CD8-positive, alpha-beta T cell (primary cell): ENCODE measurements at regions of chr1 and their contacts with region 1.

Region 1: GRCh38 chr1:101567582-101568189 is 330.9 kb downstream of the S1PR1 start:
- DNase-seq: peak; percentile 2 to 64 (median 48)
- ATAC-seq: peak; percentile 84
- H3K4me3 ChIP-seq: no peak overlapping the region
- H3K4me3 Mint-ChIP-seq: no peak overlapping the region
- H3K27ac ChIP-seq: no peak overlapping the region
- H3K27ac Mint-ChIP-seq: no peak overlapping the region
- H3K4me1 ChIP-seq: no peaks in the 10 kb centered on the region
- H3K4me1 Mint-ChIP-seq: no peaks in the 10 kb centered on the region
- H3K27me3 ChIP-seq: no peaks in the 10 kb centered on the region
- H3K27me3 Mint-ChIP-seq: peaks cover 3% of the 10 kb centered on the region
- CTCF ChIP-seq: peak; percentile 99

Region 2: DNA sequence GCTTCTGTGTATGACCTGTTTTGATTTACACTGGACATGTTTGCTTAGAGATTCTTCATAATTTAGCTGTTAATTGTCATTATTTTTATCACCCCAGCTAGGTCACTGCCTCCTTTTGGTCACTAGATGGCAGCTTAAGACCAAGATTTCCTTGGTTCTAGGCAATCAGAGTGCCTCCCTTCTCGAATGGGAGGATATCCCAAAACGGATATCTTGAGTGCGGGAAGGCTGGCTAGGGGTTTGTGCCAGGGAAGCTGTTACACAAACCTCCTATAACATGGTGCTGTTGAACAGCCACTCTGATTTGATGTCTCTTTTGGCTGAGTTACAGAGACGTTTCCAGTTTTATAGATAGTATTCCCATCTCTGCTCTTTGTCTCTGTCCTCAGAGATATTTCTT is 47.4 kb before region 1 on chr1:
- CTCF ChIA-PET with region 1: interaction called, 3 read pairs
- POLR2A ChIA-PET with region 1: no interaction called
- intact Hi-C with region 1: loop called in 1 of 2 experiments (anchors 5 kb)
- DNase-seq: peak in 2 of 9 experiments; percentile 45 to 54
- ATAC-seq: peak; percentile 48
- H3K4me3 ChIP-seq: no peak overlapping the region
- H3K4me3 Mint-ChIP-seq: no peak overlapping the region
- H3K27ac ChIP-seq: no peak overlapping the region
- H3K27ac Mint-ChIP-seq: no peak overlapping the region
- H3K4me1 ChIP-seq: no peaks in the 10 kb centered on the region
- H3K4me1 Mint-ChIP-seq: peaks cover 6% of the 10 kb centered on the region
- H3K27me3 ChIP-seq: no peaks in the 10 kb centered on the region
- H3K27me3 Mint-ChIP-seq: no peaks in the 10 kb centered on the region
- CTCF ChIP-seq: peak; percentile 47